GM12878 (cell line): ENCODE measurements at regions of chr5 and their contacts with region 1.

Region 1: GRCh38 chr5:75412111-75412990 is 75.3 kb downstream of the HMGCR start:
- DNase-seq: no peak
- ATAC-seq: peak; percentile 34; the same call in 1 of the 3 replicates
- H3K4me3 ChIP-seq: no peak overlapping the region
- H3K27ac ChIP-seq: no peak overlapping the region
- H3K4me1 ChIP-seq: no peaks in the 10 kb centered on the region
- H3K27me3 ChIP-seq: no peaks in the 10 kb centered on the region
- CTCF ChIP-seq: no peak
- EP300 ChIP-seq: no peak
- POLR2A ChIP-seq: no peak
- RAD21 ChIP-seq: no peak

Region 2: GRCh38 chr5:75236322-75237316 is 175.7 kb before region 1 on chr5 and contains the start of gene ANKRD31:
- CTCF ChIA-PET with region 1: interaction called, 3 read pairs
- POLR2A ChIA-PET with region 1: no interaction called
- RAD21 ChIA-PET with region 1: no interaction called
- SMC1A ChIA-PET with region 1: no interaction called
- in situ Hi-C with region 1: no loop called
- intact Hi-C with region 1: loop called (anchors 10 kb)
- DNase-seq: peak; percentile 42
- ATAC-seq: peak; percentile 100
- H3K4me3 ChIP-seq: peak within 1 kb of the TSS; percentile 63
- H3K27ac ChIP-seq: no peak within 1 kb of the TSS
- H3K4me1 ChIP-seq: peaks cover 3% of the 10 kb centered on the region; the same call in 1 of the 2 replicates
- H3K27me3 ChIP-seq: no peaks in the 10 kb centered on the region
- CTCF ChIP-seq: peak; percentile 60 to 85 (median 72); a peak in 5 of 6 replicates
- EP300 ChIP-seq: peak in 1 of 2 experiments; percentile 16; a peak in 1 of 4 replicates
- POLR2A ChIP-seq: peak; percentile 71
- RAD21 ChIP-seq: peak; percentile 64
- polyA plus RNA-seq, gene ANKRD31: 0.02 TPM in 1 of 2 experiments, not detected in the other